ENCODE measurements at regions of chr12 and their contacts with region 1.

Region 1: GRCh38 chr12:64181504-64182291 is 40.4 kb downstream of the KICS2 start:
- DNase-seq: peak; percentile 87
- H3K4me3 ChIP-seq: peak overlapping the region in 1 of 3 experiments; percentile 30
- H3K27ac ChIP-seq: peak overlapping the region; percentile 85
- H3K4me1 ChIP-seq: peaks cover 53% of the 10 kb centered on the region
- H3K27me3 ChIP-seq: no peaks in the 10 kb centered on the region
- CTCF ChIP-seq: peak; percentile 24 to 57
- POLR2A ChIP-seq: no peak

Region 2: DNA sequence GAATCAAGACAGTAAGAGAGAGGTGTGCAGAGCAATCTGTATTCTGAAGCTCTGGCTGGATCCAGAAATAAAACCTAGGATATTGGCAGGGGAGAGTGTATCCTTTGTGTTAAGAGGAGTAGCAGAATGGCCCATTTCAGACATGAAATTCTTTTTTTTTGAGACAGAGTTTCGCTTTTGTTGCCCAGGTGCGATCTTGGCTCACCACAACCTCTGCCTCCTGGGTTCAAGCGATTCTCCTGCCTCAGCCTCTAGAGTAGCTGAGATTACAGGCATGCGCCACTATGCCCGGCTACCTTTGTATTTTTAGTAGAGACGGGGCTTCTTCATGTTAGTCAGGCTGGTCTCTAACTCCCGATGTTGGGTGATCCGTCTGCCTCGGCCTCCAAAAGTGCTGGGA is 343.3 kb before region 1 on chr12:
- CTCF ChIA-PET with region 1: interaction called, 56 read pairs
- POLR2A ChIA-PET with region 1: no interaction called
- dilution Hi-C with region 1: no loop called
- intact Hi-C with region 1: no loop called
- DNase-seq: no peak
- H3K4me3 ChIP-seq: no peak overlapping the region
- H3K27ac ChIP-seq: no peak overlapping the region
- H3K4me1 ChIP-seq: peaks cover 3% of the 10 kb centered on the region
- H3K27me3 ChIP-seq: peaks cover 2% of the 10 kb centered on the region in 2 experiments
- CTCF ChIP-seq: no peak
- POLR2A ChIP-seq: no peak

Region 3: DNA sequence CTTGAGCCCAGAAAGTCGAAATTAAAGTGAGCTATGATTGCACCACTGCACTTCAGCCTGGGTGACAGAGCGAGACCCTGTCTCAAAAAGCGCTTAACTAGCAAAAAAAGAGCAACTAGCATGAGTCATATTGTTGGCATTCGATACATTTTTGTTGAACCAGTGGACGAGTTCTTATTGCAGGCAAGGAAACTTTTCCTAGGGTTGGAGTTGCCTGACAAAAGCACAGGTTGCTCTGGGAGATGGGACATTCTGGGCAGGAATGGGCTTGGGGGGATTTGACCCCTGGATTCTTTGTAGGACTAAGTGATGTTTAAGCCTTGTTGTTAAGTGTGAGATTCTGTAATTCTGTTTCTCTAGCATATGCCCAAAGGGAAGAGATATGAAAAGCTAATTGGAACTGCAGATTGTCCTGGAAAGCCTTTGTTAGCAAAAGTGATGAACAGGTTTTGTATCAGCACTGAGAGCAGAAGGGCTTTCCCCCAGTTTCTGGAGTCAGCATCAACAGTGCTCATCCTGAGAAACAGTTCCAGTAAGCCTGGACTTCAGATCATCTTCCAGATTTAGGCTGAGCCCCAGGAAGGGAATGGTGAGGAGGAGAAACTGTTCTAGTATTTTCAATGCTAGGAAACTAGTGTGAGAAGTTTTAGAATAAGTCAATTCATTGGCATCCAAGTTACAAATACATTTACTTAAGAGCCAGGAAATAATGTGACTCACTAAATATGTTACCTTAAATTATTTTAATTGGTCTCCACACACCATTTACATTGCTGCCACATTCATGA is 214.1 kb before region 1 on chr12:
- CTCF ChIA-PET with region 1: interaction called, 4 read pairs
- POLR2A ChIA-PET with region 1: no interaction called
- dilution Hi-C with region 1: no loop called
- intact Hi-C with region 1: loop called (anchors 5 kb)
- DNase-seq: peak; percentile 51
- H3K4me3 ChIP-seq: no peak overlapping the region
- H3K27ac ChIP-seq: peak overlapping the region; percentile 50
- H3K4me1 ChIP-seq: peaks cover 29% of the 10 kb centered on the region
- H3K27me3 ChIP-seq: no peaks in the 10 kb centered on the region
- CTCF ChIP-seq: no peak
- POLR2A ChIP-seq: no peak

Region 4: GRCh38 chr12:64088431-64089349 is 93.0 kb before region 1 on chr12:
- CTCF ChIA-PET with region 1: interaction called, 10 read pairs
- POLR2A ChIA-PET with region 1: no interaction called
- dilution Hi-C with region 1: no loop called
- intact Hi-C with region 1: loop called (anchors 1 kb)
- DNase-seq: peak; percentile 92
- H3K4me3 ChIP-seq: peak overlapping the region in 2 of 3 experiments; percentile 7 to 52
- H3K27ac ChIP-seq: peak overlapping the region; percentile 71
- H3K4me1 ChIP-seq: peaks cover 18% of the 10 kb centered on the region
- H3K27me3 ChIP-seq: no peaks in the 10 kb centered on the region
- CTCF ChIP-seq: no peak
- POLR2A ChIP-seq: peak; percentile 73

Region 5: DNA sequence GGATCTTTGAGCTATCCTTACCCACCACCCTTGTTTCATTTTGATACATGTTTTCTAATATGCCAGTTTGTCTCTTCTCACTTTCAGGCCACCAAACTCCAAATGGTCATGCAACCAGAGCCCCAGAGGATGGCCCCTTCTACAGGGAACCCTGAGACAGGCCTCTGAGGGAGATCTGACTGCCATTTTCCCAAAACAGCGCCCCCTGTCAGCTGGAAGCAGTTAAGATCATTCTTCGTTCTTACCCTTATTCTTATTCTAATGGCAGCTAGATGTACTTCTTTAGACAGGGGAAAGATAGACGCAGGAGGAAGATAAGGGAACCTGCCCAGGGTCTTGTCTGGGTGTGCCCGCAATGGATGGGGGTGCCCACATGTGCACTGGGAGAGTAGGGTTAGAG is 170.5 kb after region 1 on chr12:
- CTCF ChIA-PET with region 1: no interaction called
- POLR2A ChIA-PET with region 1: no interaction called
- dilution Hi-C with region 1: no loop called
- intact Hi-C with region 1: no loop called
- DNase-seq: no peak
- H3K4me3 ChIP-seq: no peak overlapping the region
- H3K27ac ChIP-seq: no peak overlapping the region
- H3K4me1 ChIP-seq: no peaks in the 10 kb centered on the region
- H3K27me3 ChIP-seq: no peaks in the 10 kb centered on the region
- CTCF ChIP-seq: no peak
- POLR2A ChIP-seq: no peak

Measured in endothelial cell of umbilical vein (primary cell).